A549 (cell line): ENCODE measurements at regions of chr9 and their contacts with region 1.

Region 1: GRCh38 chr9:70413798-70414775 is at the start of gene KLF9:
- DNase-seq: peak; percentile 94 to 96
- ATAC-seq: peak; percentile 69 to 77
- H3K4me3 ChIP-seq: peak within 1 kb of the TSS; percentile 64
- H3K27ac ChIP-seq: peak within 1 kb of the TSS; percentile 82 to 89
- H3K4me1 ChIP-seq: peaks cover 13% of the 10 kb centered on the region; the same call in 2 of the 3 replicates
- CTCF ChIP-seq: no peak
- EP300 ChIP-seq: no peak
- POLR2A ChIP-seq: peak; percentile 28; the same call in 1 of the 2 replicates
- RAD21 ChIP-seq: no peak
- polyA plus RNA-seq, gene KLF9: 3.1 and 3.9 TPM in 2 replicates

Region 2: DNA sequence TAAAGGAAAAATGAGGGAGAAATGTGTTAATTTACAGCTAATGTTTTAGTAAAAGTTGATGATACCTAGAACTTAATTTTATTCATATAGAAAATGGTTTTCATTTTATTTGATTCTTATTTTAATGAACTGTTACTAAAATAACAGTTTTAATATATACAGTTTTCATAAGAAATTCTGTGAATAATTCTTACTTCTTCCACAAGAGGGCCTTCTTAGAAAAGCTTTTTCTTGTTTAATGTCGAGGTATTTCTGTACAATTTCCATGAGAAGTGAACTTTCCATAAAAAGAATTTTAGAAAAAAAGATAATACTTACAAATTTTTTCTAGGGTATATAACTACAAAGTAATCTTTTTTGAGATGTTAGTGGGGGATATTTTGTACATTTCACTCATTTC is 73.5 kb before region 1 on chr9:
- CTCF ChIA-PET with region 1: interaction called, 3 read pairs
- POLR2A ChIA-PET with region 1: interaction called, 14 read pairs
- DNase-seq: peak; percentile 18 to 20
- ATAC-seq: no peak
- H3K4me3 ChIP-seq: no peak overlapping the region
- H3K27ac ChIP-seq: no peak overlapping the region
- H3K4me1 ChIP-seq: no peaks in the 10 kb centered on the region
- CTCF ChIP-seq: peak; percentile 52; the same call in 2 of the 3 replicates
- EP300 ChIP-seq: no peak
- POLR2A ChIP-seq: no peak
- RAD21 ChIP-seq: peak; percentile 61 to 68

Region 3: GRCh38 chr9:70438341-70438928 is 24.3 kb after region 1 on chr9:
- CTCF ChIA-PET with region 1: interaction called, 3 read pairs
- POLR2A ChIA-PET with region 1: interaction called, 15 read pairs
- DNase-seq: peak; percentile 32 to 77
- ATAC-seq: peak; percentile 77 to 87
- H3K4me3 ChIP-seq: no peak overlapping the region
- H3K27ac ChIP-seq: peak overlapping the region; percentile 51 to 72
- H3K4me1 ChIP-seq: peaks cover 44% of the 10 kb centered on the region
- CTCF ChIP-seq: no peak
- EP300 ChIP-seq: no peak
- POLR2A ChIP-seq: no peak
- RAD21 ChIP-seq: no peak

Region 4: DNA sequence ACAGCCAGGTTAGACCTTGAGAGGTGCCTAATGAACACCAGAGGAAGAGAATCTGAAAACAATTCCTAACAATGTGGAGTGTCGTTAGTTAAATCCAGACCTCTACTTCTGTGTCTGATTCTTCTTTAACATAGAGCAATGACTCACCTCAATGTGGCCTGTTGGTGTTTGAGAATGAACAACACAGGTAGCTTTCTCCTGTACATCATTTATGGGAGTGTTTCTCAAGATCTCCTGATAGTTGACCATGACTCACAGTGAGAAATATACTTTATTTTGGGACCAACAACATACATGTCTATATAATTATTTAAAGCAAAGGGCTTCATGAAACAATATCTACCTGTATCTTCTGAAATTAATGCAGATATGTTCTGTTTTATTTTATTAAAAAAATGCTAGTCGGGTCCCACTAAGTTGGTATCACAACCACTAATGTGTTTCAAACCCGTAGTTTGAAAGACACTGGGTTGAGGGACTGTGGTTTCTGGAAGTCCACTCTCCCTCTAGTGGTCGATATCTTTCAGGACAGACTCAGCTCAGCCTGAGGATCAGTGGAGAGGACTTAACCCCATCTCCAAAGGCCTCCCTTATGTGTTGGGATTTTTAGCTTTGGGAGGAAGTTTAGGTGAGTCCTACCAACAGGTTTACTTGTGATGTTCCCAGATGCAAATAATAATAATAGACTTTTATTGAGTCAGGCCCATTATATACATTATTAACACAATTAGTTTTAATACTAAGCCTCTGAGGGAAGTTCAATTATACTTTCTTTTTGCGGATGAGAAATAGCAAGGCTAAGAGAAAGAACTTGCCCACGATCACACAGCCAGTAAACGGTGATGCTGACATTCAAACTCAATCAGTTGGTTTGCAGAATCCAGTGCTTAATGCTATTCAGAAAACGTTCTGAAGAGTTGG is 70.4 kb after region 1 on chr9:
- CTCF ChIA-PET with region 1: interaction called, 12 read pairs
- POLR2A ChIA-PET with region 1: interaction called, 30 read pairs
- DNase-seq: peak; percentile 73 to 86
- ATAC-seq: peak; percentile 98 to 99
- H3K4me3 ChIP-seq: no peak overlapping the region
- H3K27ac ChIP-seq: peak overlapping the region in 1 of 2 experiments; percentile 44; a peak in 1 of 6 replicates
- H3K4me1 ChIP-seq: peaks cover 9% of the 10 kb centered on the region; the same call in 1 of the 3 replicates
- CTCF ChIP-seq: peak; percentile 72
- EP300 ChIP-seq: no peak
- POLR2A ChIP-seq: no peak
- RAD21 ChIP-seq: peak; percentile 74 to 76